ENCODE measurements at regions of chr4 and their contacts with region 1.

Region 1: DNA sequence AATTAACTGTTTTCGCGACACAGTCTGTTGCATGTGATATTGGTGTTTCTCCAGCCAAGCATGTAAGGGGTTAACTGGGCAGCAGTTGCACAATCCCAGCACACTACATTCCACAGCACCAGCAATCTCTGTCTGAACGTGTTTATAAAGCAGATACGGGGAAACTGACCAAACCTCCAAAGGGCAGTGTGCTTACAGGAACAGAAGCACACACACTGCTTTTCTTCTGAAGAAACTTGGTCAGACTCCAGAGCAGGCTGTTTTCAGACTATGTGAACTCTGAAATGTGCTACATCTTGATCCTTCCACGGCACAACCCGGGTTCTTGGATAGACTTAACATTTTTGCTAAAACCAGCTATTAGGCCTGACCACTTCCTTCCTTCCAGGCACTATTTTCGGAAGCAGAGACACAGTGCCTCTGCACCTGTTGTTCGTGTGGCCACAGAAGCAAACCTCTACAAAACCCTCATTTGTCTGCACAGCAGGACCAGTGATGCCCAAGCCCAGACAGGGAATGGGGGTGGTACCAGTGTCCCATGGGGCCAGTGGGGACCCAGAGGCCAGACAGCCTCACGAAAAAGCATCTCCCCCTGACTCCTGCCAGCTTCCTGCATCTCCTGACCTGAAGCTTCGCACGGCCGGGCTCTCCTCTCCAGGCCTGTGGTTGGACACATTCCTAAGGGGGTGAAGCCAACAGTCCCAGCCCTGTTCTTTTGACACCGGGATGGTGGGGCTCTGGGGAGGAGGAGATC is 90.1 kb downstream of the IRF2 start:
- DNase-seq: peak; percentile 58
- ATAC-seq: peak; percentile 46

Region 2: GRCh38 chr4:184282251-184282713 is 102.0 kb before region 1 on chr4:
- intact Hi-C with region 1: loop called (anchors 10 kb)
- DNase-seq: no peak
- ATAC-seq: peak; percentile 51

Region 3: DNA sequence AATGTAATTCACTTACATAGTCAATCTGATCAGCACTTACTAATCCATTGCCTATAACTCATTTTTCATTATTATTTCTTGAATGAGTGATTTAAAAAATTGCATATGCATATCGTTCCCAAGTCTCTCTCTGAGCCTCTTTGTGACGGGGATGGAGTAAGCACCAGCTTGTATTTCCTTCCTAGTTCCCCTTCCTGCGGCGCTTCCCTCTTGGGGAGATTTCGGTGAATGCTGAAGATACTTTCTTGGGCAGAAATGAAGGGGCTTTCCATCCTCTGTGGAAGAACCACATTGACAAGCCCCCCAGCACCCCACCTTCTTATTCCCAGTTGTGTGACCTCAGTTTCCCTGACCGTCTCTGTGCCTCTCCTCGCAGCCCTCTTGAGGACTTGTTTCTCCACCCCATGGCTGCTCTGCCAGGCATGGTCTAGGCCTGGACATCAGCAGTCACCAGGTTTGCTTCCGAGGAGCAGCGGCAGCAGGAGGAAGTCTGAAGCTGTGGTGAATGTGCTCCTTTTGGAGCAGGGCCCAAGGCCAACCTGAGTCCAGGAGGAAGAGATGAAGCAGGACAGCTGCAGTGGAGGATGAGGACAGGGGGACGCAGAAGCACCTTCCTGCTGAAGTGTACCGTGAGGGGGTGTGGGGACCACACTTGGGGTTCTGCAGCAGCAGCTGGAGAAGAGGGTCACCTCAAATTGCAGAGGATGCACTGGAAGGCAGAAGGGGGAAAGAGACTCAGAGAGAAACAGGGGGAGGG is 34.8 kb before region 1 on chr4:
- intact Hi-C with region 1: loop called (anchors 5 kb)
- DNase-seq: no peak
- ATAC-seq: no peak

Region 4: DNA sequence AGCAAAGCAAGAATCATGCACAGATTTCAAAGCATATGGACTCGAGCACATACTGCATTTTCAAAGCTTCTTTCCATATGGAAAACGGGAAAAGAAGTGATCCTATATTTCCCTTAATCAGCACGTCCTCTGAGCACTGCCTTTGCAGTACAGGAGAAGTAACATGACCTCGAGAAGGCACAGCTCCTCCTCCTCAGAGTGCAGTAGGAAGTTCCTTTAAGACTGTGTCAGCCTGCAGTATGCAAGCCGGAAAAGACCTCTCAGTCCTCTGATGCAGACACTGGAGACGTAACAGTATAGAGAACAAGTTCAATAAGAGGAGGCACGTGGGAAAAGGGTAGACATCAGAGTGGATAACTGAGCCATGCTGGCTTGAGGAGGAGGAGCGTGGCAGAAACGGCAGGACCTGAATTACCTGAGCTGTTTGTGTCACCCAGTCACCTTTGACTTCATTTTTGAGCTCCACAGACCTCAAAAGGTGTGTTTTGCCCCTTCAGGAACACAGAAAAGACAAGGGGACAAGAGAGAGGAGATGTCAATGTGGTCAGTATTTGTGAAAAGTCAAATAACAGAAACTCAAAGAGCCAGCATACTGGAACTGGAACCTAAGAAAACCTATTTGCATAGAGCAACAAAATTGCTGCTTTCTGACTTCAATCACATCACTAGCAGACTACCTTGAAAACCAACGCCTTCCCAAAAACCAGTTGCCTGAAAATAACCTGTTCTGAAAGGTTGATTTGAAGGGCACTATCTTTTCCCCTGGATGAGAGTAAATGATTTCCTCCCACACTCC is 69.3 kb after region 1 on chr4:
- intact Hi-C with region 1: no loop called
- DNase-seq: no peak
- ATAC-seq: peak; percentile 45

Region 5: GRCh38 chr4:184474263-184475095 is 90.2 kb after region 1 on chr4 and contains the start of gene IRF2:
- intact Hi-C with region 1: loop called (anchors 5 kb)
- DNase-seq: peak; percentile 98
- ATAC-seq: peak; percentile 91
- total RNA-seq, gene IRF2: 27.2 TPM

Measured in Right ventricle myocardium superior (tissue), 1 donor.